ENCODE measurements at regions of chr17 and their contacts with region 1.

Region 1: DNA sequence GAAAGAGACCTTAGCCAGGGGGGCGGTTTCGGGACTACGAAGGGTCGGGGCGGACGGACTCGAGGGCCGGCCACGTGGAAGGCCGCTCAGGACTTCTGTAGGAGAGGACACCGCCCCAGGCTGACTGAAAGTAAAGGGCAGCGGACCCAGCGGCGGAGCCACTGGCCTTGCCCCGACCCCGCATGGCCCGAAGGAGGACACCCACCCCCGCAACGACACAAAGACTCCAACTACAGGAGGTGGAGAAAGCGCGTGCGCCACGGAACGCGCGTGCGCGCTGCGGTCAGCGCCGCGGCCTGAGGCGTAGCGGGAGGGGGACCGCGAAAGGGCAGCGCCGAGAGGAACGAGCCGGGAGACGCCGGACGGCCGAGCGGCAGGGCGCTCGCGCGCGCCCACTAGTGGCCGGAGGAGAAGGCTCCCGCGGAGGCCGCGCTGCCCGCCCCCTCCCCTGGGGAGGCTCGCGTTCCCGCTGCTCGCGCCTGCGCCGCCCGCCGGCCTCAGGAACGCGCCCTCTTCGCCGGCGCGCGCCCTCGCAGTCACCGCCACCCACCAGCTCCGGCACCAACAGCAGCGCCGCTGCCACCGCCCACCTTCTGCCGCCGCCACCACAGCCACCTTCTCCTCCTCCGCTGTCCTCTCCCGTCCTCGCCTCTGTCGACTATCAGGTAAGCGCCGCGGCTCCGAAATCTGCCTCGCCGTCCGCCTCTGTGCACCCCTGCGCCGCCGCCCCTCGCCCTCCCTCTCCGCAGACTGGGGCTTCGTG is at the start of gene MAPT:
- DNase-seq: peak; percentile 89 to 99 (median 94)

Region 2: DNA sequence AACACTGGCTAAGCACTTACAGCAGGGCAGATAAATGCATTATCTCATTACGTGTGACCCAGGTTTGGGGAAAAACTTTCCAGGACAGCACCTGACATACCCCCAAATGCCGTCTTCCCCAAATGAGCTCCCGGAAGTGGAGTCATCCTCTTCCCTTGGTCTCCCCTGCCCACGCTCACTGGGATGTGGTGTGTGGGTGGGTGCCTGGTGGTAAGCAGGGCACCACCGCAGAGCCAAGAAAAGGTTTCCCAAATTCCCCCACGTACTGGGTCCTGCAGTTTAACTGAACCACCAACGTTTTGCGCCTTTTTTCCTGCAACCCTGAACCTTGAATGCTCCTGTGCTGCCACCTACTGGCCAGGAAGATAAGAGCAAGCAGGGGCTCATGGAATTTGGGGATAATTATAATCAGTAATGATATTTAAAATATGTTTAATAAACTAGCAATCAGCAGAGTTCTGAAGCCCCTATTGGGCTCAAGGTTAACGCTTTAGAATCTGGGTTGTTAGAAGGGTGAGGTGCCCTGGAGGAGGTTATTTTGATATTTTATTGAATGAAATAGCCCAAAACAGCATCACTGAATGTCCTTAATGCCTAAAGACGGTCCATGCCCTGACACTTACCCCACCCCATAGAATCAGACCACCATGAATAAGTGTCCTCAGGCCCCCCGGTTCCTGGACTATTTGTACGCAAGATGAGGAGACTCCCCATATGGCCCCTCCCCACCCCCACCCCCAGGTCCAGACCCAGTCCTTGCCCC is 41.5 kb before region 1 on chr17:
- intact Hi-C with region 1: loop called (anchors 5 kb)
- DNase-seq: peak in 8 of 10 donors; percentile 61 to 93 (median 81)

Region 3: DNA sequence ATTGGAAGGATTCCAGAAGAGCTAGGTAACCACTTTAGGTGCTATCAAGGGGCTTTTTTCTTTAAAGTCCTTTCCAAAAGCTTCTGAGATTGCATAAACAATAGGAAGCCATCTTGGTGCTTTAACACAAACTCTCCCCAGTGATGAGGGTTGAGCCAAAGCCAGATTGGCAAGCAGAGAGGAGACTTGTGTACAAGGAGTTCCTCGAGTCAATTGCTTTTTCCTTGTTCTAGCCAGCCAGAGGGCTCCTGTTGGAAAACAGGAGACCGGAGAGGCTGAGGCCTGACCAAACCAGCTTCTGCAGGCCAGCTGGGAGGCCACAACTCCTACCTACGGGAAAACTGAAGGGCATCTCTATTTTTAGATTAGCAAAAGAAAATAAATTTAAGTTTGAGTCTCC is 46.6 kb after region 1 on chr17:
- intact Hi-C with region 1: loop called (anchors 2 kb)
- DNase-seq: peak in 6 of 10 donors; percentile 27 to 61 (median 49)

Region 4: GRCh38 chr17:45946841-45947256 is 52.6 kb after region 1 on chr17:
- intact Hi-C with region 1: loop called (anchors 2 kb)
- DNase-seq: peak in 1 of 10 donors; percentile 32

Measured in posterior cingulate gyrus (tissue), 11 donors.